ENCODE measurements at regions of chr4 and their contacts with region 1.

Region 1: GRCh38 chr4:94669672-94670664 is 87.8 kb upstream of the BMPR1B start:
- DNase-seq: no peak
- H3K4me3 Mint-ChIP-seq: no peak overlapping the region
- H3K27ac Mint-ChIP-seq: peak overlapping the region; percentile 91
- H3K4me1 Mint-ChIP-seq: peaks cover 15% of the 10 kb centered on the region
- H3K27me3 Mint-ChIP-seq: no peaks in the 10 kb centered on the region
- CTCF ChIP-seq: no peak

Region 2: GRCh38 chr4:94641702-94642560 is 28.0 kb before region 1 on chr4:
- CTCF ChIA-PET with region 1: no interaction called
- intact Hi-C with region 1: loop called (anchors 2 kb)
- DNase-seq: no peak
- H3K4me3 Mint-ChIP-seq: no peak overlapping the region
- H3K27ac Mint-ChIP-seq: peak overlapping the region; percentile 91
- H3K4me1 Mint-ChIP-seq: peaks cover 31% of the 10 kb centered on the region
- H3K27me3 Mint-ChIP-seq: no peaks in the 10 kb centered on the region
- CTCF ChIP-seq: no peak

Region 3: GRCh38 chr4:94722748-94723147 is 52.8 kb after region 1 on chr4:
- CTCF ChIA-PET with region 1: no interaction called
- intact Hi-C with region 1: loop called (anchors 2 kb)
- DNase-seq: no peak
- H3K4me3 Mint-ChIP-seq: no peak overlapping the region
- H3K27ac Mint-ChIP-seq: no peak overlapping the region
- H3K4me1 Mint-ChIP-seq: peaks cover 25% of the 10 kb centered on the region
- H3K27me3 Mint-ChIP-seq: no peaks in the 10 kb centered on the region
- CTCF ChIP-seq: no peak

Region 4: GRCh38 chr4:94814237-94814636 is 144.3 kb after region 1 on chr4:
- CTCF ChIA-PET with region 1: no interaction called
- intact Hi-C with region 1: no loop called
- DNase-seq: no peak
- H3K4me3 Mint-ChIP-seq: no peak overlapping the region
- H3K27ac Mint-ChIP-seq: no peak overlapping the region
- H3K4me1 Mint-ChIP-seq: no peaks in the 10 kb centered on the region
- H3K27me3 Mint-ChIP-seq: no peaks in the 10 kb centered on the region
- CTCF ChIP-seq: no peak